Heart right ventricle (tissue), 16 donors: ENCODE measurements at regions of chr7 and their contacts with region 1.

Region 1: GRCh38 chr7:139075031-139075652 is 34.4 kb downstream of the ZC3HAV1 start:
- DNase-seq: peak; percentile 34 to 79
- ATAC-seq: peak; percentile 47 to 95 (median 90)
- H3K4me3 ChIP-seq: no peak overlapping the region
- H3K27ac ChIP-seq: peak overlapping the region in 5 of 10 donors; percentile 20 to 52 (median 42)
- H3K4me1 ChIP-seq: peaks cover 0 to 24% (median 5%) of the 10 kb centered on the region in 9 donors
- H3K27me3 ChIP-seq: no peaks in the 10 kb centered on the region
- CTCF ChIP-seq: peak; percentile 74 to 92 (median 84)

Region 2: DNA sequence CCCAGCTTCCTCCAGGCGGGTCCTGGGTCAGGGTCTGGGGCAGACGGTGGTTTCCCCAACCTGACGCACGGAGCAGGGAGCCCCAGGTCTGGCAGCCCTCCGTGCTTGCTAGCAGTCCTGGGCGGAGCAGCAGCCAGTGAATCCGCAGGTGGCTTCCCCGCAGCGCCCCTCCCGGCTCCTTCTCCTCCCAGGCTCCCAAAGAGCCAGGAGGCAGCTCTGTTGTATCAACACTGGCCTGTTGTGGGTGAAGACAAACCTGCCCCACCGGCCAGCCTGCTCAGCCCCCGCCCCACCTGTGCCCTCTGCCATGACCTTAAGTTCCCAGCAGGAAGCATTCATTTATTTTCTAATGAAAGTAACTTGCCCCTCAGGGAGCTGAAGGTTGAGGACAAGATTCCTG is 301.3 kb before region 1 on chr7:
- intact Hi-C with region 1: no loop called
- DNase-seq: no peak
- ATAC-seq: no peak
- H3K4me3 ChIP-seq: no peak overlapping the region
- H3K27ac ChIP-seq: no peak overlapping the region
- H3K4me1 ChIP-seq: no peaks in the 10 kb centered on the region
- H3K27me3 ChIP-seq: peaks cover 0 to 12% (median 0%) of the 10 kb centered on the region in 7 donors
- CTCF ChIP-seq: no peak

Region 3: DNA sequence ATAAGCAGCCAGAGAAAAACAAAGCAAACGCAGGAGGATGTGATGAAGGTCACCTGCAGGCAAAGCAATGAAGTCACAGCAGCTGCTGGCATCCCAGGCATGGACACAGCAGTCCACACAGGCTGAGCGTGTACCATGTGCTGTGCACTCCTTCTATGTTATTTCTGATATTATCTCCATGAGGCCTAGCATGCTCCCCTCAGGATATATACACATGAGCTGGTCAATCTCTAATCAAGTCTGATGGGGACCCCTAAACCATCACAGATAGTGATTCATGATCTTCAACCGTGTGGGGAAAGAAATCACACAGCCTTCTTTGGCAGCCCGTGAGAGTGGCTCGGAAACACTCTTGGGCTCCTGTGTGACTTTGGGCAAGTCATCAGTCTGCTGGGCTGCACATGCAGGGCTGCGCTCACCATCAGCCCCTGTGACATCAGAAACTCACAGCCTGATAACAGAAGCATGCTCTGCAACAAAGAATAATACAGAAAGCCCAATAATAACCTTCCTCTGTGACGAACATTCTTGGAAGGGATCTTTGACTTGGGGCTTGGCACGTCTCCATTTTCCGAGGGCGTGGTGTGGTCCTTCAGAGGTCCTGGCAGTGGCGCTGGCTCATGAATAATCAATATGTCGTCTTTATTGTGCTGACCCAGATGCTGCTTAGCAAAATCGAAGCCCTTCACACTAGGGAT is 194.1 kb before region 1 on chr7:
- intact Hi-C with region 1: loop called in 8 of 10 experiments (anchors 5 to 10 kb)
- DNase-seq: peak; percentile 50 to 59
- ATAC-seq: peak; percentile 47 to 88 (median 77)
- H3K4me3 ChIP-seq: no peak overlapping the region
- H3K27ac ChIP-seq: peak overlapping the region in 2 of 10 donors; percentile 19 to 28
- H3K4me1 ChIP-seq: peaks cover 4 to 15% (median 9%) of the 10 kb centered on the region in 9 donors
- H3K27me3 ChIP-seq: no peaks in the 10 kb centered on the region
- CTCF ChIP-seq: no peak

Region 4: DNA sequence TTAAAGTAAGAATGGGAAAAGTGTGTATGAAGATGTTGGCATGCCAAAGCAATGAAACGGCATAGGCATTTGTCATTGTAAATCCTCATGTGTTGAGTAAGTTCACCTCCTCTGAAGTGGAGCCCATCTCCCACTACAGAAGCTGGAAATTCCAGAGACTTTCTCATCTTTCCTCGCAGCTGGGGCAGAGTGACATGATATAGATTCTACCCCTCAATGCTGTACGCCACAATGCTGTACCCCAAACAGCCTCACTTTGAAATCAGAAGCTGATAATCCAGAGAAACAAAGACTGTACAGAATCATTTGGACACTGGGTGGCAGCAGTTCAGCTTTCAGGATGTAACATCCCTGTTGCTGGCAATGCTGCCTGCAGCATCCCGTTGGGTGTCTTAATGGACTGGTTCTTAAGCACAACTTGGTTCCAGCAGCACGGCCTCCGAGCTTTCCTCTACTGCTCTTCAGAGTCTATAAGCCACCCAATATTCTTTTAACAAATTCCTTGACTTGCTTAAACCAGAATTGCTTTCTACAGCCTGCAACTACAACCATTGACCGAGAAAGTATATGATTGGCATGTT is 58.1 kb before region 1 on chr7:
- intact Hi-C with region 1: loop called (anchors 1 to 5 kb)
- DNase-seq: peak; percentile 35 to 68
- ATAC-seq: peak in 7 of 8 donors; percentile 71 to 86 (median 81)
- H3K4me3 ChIP-seq: no peak overlapping the region
- H3K27ac ChIP-seq: no peak overlapping the region
- H3K4me1 ChIP-seq: peaks cover 0 to 4% (median 0%) of the 10 kb centered on the region in 9 donors
- H3K27me3 ChIP-seq: peaks cover 0 to 6% (median 0%) of the 10 kb centered on the region in 7 donors
- CTCF ChIP-seq: peak; percentile 33 to 80 (median 69)

Region 5: GRCh38 chr7:139035586-139036353 is 39.4 kb before region 1 on chr7 and contains the start of gene ZC3HAV1L:
- intact Hi-C with region 1: loop called in 2 of 10 experiments (anchors 1 to 5 kb)
- DNase-seq: peak; percentile 61 to 70
- ATAC-seq: peak; percentile 85 to 96 (median 92)
- H3K4me3 ChIP-seq: peak within 1 kb of the TSS; percentile 50 to 88 (median 74)
- H3K27ac ChIP-seq: peak within 1 kb of the TSS; percentile 3 to 91 (median 81)
- H3K4me1 ChIP-seq: peaks cover 0 to 28% (median 21%) of the 10 kb centered on the region in 9 donors
- H3K27me3 ChIP-seq: peaks cover 0 to 3% (median 0%) of the 10 kb centered on the region in 7 donors
- CTCF ChIP-seq: no peak
- total RNA-seq, gene ZC3HAV1L: 1.8 to 5.8 (median 2.5) TPM

Region 6: DNA sequence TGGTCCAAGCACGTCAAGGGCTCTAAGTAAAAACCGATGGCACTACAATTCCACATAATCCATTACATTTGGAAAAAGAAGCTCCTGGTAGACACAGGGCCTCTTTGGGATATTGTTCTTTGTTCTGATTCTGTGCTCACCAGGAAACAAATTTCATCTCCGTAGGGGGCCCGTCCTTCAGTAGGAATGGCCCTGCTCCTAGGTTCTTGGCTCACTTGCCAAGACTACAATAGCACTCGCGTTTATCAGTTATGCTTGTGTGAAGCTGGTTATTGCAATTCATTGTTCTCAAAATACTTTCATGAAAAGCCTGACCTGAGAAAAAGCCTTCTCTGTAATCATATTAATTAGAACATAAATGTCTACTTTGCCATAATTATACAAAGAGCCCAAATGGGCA is 29.0 kb before region 1 on chr7:
- intact Hi-C with region 1: no loop called
- DNase-seq: no peak
- ATAC-seq: peak in 5 of 8 donors; percentile 49 to 74 (median 59)
- H3K4me3 ChIP-seq: no peak overlapping the region
- H3K27ac ChIP-seq: peak overlapping the region in 4 of 10 donors; percentile 2 to 28 (median 10)
- H3K4me1 ChIP-seq: peaks cover 0 to 34% (median 8%) of the 10 kb centered on the region in 9 donors
- H3K27me3 ChIP-seq: no peaks in the 10 kb centered on the region
- CTCF ChIP-seq: no peak

Region 7: GRCh38 chr7:139133335-139134139 is 58.4 kb after region 1 on chr7:
- intact Hi-C with region 1: loop called in 1 of 10 experiments (anchors 1 kb)
- DNase-seq: peak; percentile 87
- ATAC-seq: peak; percentile 96 to 99 (median 99)
- H3K4me3 ChIP-seq: peak overlapping the region; percentile 25 to 79 (median 62)
- H3K27ac ChIP-seq: peak overlapping the region in 9 of 10 donors; percentile 46 to 84 (median 66)
- H3K4me1 ChIP-seq: peaks cover 0 to 33% (median 12%) of the 10 kb centered on the region in 9 donors
- H3K27me3 ChIP-seq: no peaks in the 10 kb centered on the region
- CTCF ChIP-seq: no peak

Region 8: DNA sequence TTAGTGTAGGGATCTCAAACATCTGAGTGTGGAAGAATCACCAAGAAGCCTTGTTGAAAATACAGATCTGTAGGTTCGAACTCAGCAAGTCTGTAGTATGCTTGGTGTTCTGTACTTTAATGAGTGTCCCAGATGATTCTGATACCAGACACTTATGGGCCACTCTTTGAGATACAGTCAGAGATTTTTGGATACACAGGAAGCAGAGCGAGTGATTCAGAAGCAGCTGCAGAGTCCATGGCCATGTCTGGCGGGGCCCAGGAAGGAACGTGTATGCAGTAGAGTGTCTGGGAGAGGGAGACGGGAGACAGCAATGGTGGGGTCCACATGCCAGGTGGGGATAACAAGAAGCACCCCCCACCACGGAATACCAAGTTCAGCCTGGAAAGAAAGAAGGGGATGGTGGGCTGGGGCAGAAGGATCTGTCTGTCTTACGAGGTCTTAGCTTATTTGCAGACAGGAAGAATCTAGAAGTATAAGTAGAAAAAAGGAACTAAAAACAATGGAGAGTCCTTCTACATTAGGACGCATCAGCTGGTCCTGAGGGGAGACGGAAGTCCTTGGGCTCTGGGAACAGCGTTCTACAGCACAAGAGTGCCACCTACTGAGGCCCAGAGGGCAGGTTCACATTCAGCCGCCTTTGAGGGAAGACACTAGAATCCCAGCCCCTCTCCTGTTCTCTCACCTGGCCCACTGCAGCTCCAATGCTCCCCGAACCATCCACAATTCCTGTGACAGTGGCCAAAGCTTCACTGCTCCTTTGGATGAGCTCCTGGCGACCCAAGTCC is 1267.8 kb after region 1 on chr7:
- intact Hi-C with region 1: no loop called
- DNase-seq: peak; percentile 18 to 28
- ATAC-seq: peak in 7 of 8 donors; percentile 74 to 86 (median 81)
- H3K4me3 ChIP-seq: no peak overlapping the region
- H3K27ac ChIP-seq: no peak overlapping the region
- H3K4me1 ChIP-seq: peaks cover 0 to 3% (median 0%) of the 10 kb centered on the region in 9 donors
- H3K27me3 ChIP-seq: no peaks in the 10 kb centered on the region
- CTCF ChIP-seq: peak in 8 of 9 donors; percentile 16 to 62 (median 52)